ENCODE measurements at regions of chr9 and their contacts with region 1.

Region 1: GRCh38 chr9:136790927-136791641 is at the start of gene TMEM141:
- DNase-seq: peak; percentile 100
- ATAC-seq: peak; percentile 93
- H3K4me3 Mint-ChIP-seq: peak within 1 kb of the TSS; percentile 80
- H3K27ac Mint-ChIP-seq: peak within 1 kb of the TSS; percentile 84
- H3K4me1 Mint-ChIP-seq: peaks cover 20% of the 10 kb centered on the region
- H3K27me3 Mint-ChIP-seq: no peaks in the 10 kb centered on the region
- total RNA-seq, gene TMEM141: 30.9 to 47.1 TPM

Region 2: DNA sequence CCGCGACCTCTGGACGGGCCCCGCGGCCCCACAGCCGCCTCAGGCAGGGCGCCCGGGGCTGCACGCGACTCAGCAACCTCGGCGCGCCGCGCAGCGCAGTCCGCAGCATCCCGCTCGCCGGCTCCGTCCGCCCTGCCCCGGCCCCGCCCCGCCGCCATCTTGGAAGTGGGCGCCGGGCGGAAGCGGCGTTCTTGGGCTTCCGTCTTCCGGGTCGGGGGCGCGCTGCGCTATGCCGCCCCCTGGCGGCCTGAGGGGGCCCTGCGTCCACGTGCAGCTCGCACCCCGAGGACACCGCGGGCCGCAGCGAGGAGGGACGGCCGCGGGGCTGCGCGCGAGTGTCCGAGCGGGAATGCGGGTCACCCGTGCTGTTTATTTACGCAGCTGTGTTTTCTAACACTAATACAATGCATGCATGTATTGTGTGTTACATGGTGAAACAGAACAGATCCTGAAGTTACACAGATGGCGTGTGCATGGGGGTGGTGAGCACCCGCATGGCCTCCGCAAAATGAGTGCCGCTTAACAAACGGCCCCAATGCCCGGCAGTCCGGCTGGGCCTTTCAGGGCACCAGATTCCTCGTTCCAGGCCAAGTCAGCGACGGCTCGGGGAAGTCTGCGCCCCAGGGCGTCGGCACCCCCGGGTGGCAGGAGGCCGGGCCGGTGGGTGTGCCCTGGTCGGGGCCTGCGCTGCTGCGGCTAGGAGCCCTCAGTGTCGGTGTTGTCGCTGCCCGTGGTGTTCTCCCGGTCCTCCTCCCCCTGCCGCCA is 427.3 kb before region 1 on chr9 and contains the start of gene DNLZ:
- CTCF ChIA-PET with region 1: no interaction called
- POLR2A ChIA-PET with region 1: no interaction called
- intact Hi-C with region 1: loop called in 1 of 2 experiments (anchors 1 kb)
- DNase-seq: peak; percentile 93
- ATAC-seq: peak; percentile 73
- H3K4me3 Mint-ChIP-seq: peak within 1 kb of the TSS; percentile 79
- H3K27ac Mint-ChIP-seq: peak within 1 kb of the TSS; percentile 80
- H3K4me1 Mint-ChIP-seq: peaks cover 10% of the 10 kb centered on the region
- H3K27me3 Mint-ChIP-seq: no peaks in the 10 kb centered on the region
- total RNA-seq, gene DNLZ: 11.7 to 12.8 TPM

Region 3: DNA sequence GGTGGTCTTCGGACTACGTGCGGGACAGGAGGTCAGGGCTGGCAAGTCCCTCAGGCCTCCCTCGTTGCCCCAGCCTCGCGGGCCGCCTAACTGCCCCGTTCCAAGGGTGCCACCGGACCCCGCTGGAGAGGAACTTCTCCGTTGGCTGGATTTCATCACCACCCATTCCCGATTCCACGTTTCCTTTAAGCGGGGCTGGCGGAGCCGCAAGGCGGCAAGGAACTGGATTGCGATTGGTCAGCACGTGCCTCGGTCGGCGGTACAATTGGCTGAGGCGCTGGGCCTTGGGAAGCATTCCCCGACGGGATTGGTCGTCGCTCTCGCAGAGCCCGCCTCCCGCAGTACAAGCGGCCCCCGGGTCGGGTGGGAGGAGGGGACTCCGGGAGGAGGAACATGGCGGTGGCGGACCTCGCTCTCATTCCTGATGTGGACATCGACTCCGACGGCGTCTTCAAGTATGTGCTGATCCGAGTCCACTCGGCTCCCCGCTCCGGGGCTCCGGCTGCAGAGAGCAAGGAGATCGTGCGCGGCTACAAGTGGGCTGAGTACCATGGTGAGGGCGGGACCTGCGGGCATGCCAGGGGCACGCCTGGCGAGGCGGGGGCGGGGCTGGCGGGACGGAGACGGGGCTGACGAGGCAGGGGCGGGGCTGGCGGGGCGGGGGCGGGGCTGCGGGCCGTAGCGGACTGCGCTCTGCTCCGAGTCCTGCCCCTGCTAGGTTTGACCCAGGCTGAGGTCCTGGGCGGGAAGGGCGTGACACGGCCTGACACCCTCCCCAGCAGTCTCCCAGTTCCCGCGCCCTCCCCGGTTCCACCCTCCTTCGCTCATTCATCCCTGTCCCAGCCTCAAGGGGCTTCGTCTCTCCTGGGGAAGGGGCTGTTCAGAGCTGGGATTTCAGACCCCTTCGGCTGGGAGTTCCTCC is 58.2 kb after region 1 on chr9 and contains the start of gene PHPT1:
- CTCF ChIA-PET with region 1: no interaction called
- POLR2A ChIA-PET with region 1: no interaction called
- intact Hi-C with region 1: loop called (anchors 1 to 2 kb)
- DNase-seq: peak; percentile 98
- ATAC-seq: peak; percentile 91
- H3K4me3 Mint-ChIP-seq: peak within 1 kb of the TSS; percentile 93
- H3K27ac Mint-ChIP-seq: peak within 1 kb of the TSS; percentile 88
- H3K4me1 Mint-ChIP-seq: peaks cover 8% of the 10 kb centered on the region
- H3K27me3 Mint-ChIP-seq: peaks cover 12% of the 10 kb centered on the region
- total RNA-seq, gene PHPT1: 94.5 to 98.9 TPM

Region 4: DNA sequence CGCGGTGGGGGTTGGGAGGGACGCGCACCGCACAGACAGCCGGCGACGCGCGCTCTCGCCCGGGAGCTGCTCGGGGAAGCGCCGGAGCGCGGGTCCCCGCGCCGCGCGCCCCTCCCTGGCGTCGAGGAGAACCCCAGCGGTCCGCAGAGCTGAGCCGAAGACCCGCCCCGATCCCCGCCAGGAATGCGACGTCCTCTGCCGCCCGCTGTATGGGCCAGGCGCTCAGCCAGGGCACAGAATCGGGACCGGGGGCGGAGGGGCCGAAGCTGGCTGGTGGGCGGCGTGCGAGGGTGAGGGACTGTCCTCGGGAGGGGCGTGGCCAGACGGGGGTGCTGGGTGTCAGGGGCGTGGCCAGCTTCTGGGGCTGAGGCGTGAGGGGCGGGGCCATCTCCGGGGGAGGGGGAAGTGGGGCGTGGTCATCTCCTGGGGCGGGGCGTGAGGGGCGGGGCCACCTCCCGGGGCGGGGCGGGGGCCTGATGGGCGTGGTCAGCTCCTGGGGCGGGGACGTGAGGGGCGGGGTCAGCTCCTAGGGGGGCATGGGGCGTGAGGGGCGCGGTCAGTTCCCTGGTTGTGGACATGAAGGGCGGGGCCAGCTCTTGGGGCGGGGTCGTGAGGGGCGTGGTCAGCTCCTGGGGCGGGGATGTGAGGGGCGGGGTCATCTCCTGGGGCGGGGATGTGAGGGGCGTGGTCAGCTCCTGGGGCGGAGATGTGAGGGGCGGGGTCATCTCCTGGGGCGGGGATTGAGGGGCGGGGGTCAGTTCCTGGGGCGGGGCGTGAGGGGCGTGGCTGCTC is 187.2 kb after region 1 on chr9:
- CTCF ChIA-PET with region 1: interaction called, 5 read pairs
- POLR2A ChIA-PET with region 1: no interaction called
- intact Hi-C with region 1: loop called in 1 of 2 experiments (anchors 1 kb)
- DNase-seq: peak; percentile 87
- ATAC-seq: peak; percentile 47
- H3K4me3 Mint-ChIP-seq: no peak overlapping the region
- H3K27ac Mint-ChIP-seq: no peak overlapping the region
- H3K4me1 Mint-ChIP-seq: peaks cover 13% of the 10 kb centered on the region
- H3K27me3 Mint-ChIP-seq: no peaks in the 10 kb centered on the region

Region 5: GRCh38 chr9:137070201-137070905 is 279.3 kb after region 1 on chr9 and contains the start of gene SAPCD2:
- CTCF ChIA-PET with region 1: no interaction called
- POLR2A ChIA-PET with region 1: no interaction called
- intact Hi-C with region 1: loop called (anchors 1 to 10 kb)
- DNase-seq: peak; percentile 92
- ATAC-seq: peak; percentile 91
- H3K4me3 Mint-ChIP-seq: peak within 1 kb of the TSS; percentile 71
- H3K27ac Mint-ChIP-seq: peak within 1 kb of the TSS; percentile 71
- H3K4me1 Mint-ChIP-seq: peaks cover 9% of the 10 kb centered on the region
- H3K27me3 Mint-ChIP-seq: no peaks in the 10 kb centered on the region
- total RNA-seq, gene SAPCD2: 6.4 to 8.8 TPM

Region 6: DNA sequence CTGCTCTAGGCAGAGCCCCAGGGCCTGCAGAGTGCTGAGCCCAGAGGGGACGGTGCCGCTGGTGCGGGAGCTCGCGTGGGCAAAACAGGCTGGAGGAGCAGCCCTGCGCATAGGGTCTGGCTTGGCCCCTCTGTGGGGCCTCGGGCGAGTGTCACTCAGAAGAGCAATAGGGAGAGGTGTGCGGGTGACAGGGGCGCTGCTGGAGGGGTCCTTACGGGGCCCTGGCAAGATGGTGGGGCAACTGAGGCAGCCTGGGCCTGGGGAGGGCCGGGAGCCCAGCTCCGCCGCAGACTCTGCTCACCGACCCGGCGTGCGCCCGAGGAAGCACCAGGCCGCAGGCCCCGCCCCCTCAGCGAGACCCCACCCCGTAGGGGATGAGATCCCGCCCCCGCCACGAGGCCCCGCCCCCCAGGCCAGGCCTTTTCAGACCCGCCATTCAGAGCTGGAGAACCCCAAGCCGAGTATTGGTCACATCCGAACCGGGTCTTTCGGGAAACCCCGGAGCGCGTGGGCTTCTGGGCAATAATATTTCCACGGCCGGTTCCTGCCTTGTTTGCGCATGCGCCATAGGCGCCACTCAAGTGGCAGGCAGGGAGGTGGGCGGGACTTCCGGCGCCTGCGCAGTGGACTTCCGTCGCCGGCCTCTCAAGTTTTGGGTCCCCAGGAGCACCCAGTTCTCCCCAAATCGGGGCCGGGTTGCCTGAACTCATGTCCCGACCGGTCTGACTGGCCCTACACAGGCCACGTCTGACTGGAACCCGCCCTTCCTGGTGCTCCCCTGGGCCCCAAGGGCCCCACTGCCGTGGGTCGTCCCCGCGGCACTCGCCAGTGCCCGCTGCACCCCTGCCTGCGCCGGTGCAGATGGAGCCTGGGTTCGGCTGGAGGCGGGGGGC is 432.2 kb after region 1 on chr9:
- CTCF ChIA-PET with region 1: no interaction called
- POLR2A ChIA-PET with region 1: no interaction called
- intact Hi-C with region 1: loop called (anchors 1 to 10 kb)
- DNase-seq: peak; percentile 99
- ATAC-seq: peak; percentile 90
- H3K4me3 Mint-ChIP-seq: peak overlapping the region; percentile 80
- H3K27ac Mint-ChIP-seq: peak overlapping the region; percentile 83
- H3K4me1 Mint-ChIP-seq: peaks cover 8% of the 10 kb centered on the region
- H3K27me3 Mint-ChIP-seq: peaks cover 2% of the 10 kb centered on the region

Region 7: DNA sequence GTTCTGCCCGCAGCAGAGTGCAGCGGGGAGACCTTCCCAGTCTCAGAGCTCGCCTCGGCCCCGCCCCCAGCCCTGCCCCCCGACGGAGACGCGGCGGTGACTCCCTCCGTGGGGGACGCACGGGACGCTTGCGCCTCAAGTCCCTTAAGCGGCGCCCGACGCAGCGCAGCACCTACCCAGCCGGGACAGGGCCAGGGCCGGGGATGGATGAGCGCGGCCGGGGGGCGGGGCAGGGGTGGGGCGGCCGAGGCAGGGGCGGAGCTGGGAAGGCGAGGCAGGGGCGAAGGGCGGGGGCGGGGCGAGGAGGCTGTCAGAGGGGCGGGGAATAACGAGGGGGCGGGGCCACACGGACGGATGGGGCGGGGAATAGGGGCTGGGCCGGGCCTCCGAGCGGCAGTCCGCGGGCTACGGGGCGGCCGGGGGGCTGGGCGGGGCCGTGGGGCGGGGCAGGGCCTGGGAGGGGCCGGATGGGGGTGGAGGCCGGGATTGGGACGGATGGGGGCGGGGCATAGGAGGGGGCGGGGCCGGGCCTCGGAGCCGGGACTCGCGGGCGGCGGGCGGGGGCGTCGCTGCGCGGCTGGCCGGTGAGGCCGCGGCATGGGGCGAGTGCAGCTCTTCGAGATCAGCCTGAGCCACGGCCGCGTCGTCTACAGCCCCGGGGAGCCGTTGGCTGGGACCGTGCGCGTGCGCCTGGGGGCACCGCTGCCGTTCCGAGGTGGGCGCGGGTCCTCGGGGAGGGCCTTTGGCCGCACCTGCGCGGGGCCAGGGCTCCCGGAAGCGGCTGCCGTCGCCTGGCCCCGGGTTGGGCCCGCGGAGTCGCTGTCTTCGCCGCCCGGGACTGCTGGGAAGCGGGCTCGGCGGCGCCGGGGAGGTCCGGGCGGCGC is 814.3 kb after region 1 on chr9 and contains the start of gene ARRDC1:
- CTCF ChIA-PET with region 1: no interaction called
- POLR2A ChIA-PET with region 1: no interaction called
- intact Hi-C with region 1: loop called in 1 of 2 experiments (anchors 2 kb)
- DNase-seq: peak; percentile 97
- ATAC-seq: peak; percentile 92
- H3K4me3 Mint-ChIP-seq: peak within 1 kb of the TSS; percentile 76
- H3K27ac Mint-ChIP-seq: no peak within 1 kb of the TSS
- H3K4me1 Mint-ChIP-seq: peaks cover 24% of the 10 kb centered on the region
- H3K27me3 Mint-ChIP-seq: no peaks in the 10 kb centered on the region
- total RNA-seq, gene ARRDC1: 32.4 to 41.6 TPM